Thyroid gland (tissue), 4 donors: ENCODE measurements at regions of chr11 and their contacts with region 1.

Region 1: DNA sequence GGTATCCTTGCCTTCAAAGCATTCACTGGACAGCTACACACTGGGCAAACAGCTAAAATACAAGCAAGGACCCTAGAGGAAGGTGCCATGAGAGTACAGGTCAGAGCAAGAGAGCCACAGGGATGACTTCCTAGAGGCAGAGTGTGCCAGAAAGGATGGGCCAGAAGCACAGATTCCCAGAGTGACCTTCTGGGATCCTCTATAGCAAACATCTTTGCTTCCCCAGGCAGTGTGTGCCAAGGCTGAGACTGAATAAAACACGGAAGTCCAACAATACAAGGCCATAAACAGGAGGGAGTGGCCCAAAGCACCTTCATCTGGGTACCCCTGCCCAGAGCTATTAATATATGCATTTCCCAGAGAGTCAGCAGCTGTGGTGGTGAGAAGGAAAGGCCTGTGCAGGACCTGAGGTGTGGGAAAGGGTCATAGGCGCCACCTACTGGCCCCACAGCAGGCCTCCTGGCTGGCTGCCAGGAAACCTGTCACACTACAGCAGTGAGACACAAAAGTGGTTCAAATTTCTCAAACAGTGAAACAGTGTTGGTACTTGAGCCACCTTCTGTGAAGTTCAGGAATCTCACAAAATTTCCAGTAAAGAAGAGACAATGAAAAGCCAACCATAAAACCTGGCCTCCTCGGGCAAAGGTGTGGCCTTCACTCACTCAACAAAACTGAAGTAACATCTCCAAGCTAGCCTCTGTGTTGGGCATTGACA is 20.3 kb downstream of the CLPB start:
- DNase-seq: peak; percentile 95 to 96
- H3K4me3 ChIP-seq: no peak overlapping the region
- H3K27ac ChIP-seq: peak overlapping the region; percentile 73 to 86 (median 83)
- H3K4me1 ChIP-seq: peaks cover 33 to 61% of the 10 kb centered on the region in 2 donors
- H3K27me3 ChIP-seq: no peaks in the 10 kb centered on the region
- CTCF ChIP-seq: peak; percentile 54 to 96 (median 87)
- POLR2A ChIP-seq: no peak

Region 2: GRCh38 chr11:72352859-72353551 is 61.1 kb before region 1 on chr11:
- intact Hi-C with region 1: loop called (anchors 10 kb)
- DNase-seq: peak; percentile 70 to 77
- H3K4me3 ChIP-seq: no peak overlapping the region
- H3K27ac ChIP-seq: no peak overlapping the region
- H3K4me1 ChIP-seq: peaks cover 5 to 20% of the 10 kb centered on the region in 2 donors
- H3K27me3 ChIP-seq: no peaks in the 10 kb centered on the region
- CTCF ChIP-seq: peak in 4 of 6 experiments; percentile 40 to 53 (median 50)
- POLR2A ChIP-seq: no peak